OCI-LY7 (cell line): ENCODE measurements at regions of chr7 and their contacts with region 1.

Region 1: GRCh38 chr7:128940494-128941322 is 3.0 kb downstream of the IRF5 start:
- DNase-seq: peak; percentile 93
- H3K4me3 ChIP-seq: peak overlapping the region; percentile 60
- H3K27ac ChIP-seq: peak overlapping the region; percentile 75
- H3K4me1 ChIP-seq: peaks cover 37% of the 10 kb centered on the region
- CTCF ChIP-seq: 0 out of 2 replicates have a peak, but pooled peaks have one; percentile 4

Region 2: GRCh38 chr7:128728598-128728997 is 212.1 kb before region 1 on chr7:
- CTCF ChIA-PET with region 1: no interaction called
- POLR2A ChIA-PET with region 1: no interaction called
- intact Hi-C with region 1: no loop called
- DNase-seq: no peak
- H3K4me3 ChIP-seq: no peak overlapping the region
- H3K27ac ChIP-seq: no peak overlapping the region
- H3K4me1 ChIP-seq: no peaks in the 10 kb centered on the region
- CTCF ChIP-seq: no peak

Region 3: GRCh38 chr7:128849804-128850490 is 90.8 kb before region 1 on chr7:
- CTCF ChIA-PET with region 1: no interaction called
- POLR2A ChIA-PET with region 1: no interaction called
- intact Hi-C with region 1: no loop called
- DNase-seq: no peak
- H3K4me3 ChIP-seq: no peak overlapping the region
- H3K27ac ChIP-seq: no peak overlapping the region
- H3K4me1 ChIP-seq: no peaks in the 10 kb centered on the region
- CTCF ChIP-seq: no peak

Region 4: GRCh38 chr7:128954830-128955802 is 14.4 kb after region 1 on chr7:
- CTCF ChIA-PET with region 1: interaction called, 11 read pairs
- POLR2A ChIA-PET with region 1: interaction called, 29 read pairs
- intact Hi-C with region 1: loop called (anchors 1 kb)
- DNase-seq: peak; percentile 74
- H3K4me3 ChIP-seq: peak overlapping the region; percentile 44
- H3K27ac ChIP-seq: peak overlapping the region; percentile 87
- H3K4me1 ChIP-seq: peaks cover 42% of the 10 kb centered on the region
- CTCF ChIP-seq: peak; percentile 43; the same call in 1 of the 2 replicates

Region 5: DNA sequence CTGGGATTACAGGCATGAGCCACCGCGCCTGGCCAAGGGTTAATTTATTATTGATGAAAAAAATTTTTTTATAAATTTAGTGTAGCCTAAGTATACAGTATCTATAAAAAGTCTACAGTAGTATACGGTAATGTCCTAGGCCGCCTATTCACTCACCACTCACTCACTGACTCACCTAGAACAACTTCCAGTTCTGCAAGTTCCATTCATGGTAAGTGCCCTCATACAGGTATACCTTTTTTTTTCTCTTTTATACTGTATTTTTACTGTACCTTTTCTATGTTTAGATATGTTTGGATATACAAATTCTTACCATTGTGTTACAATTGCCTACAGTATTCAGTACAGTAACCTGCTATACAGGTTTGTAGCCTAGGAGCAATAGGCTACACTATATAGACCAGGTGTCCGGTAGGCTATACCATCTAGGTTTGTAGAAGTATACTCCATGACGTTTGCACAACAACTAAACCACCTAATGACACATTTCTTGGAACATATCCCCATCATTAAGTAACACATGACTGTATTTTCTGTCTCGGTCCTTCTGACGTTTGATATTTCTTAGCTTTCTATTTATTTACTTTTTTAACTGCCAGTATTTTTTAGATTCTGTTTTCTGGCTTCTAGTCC is 20.4 kb after region 1 on chr7:
- CTCF ChIA-PET with region 1: interaction called, 3 read pairs
- POLR2A ChIA-PET with region 1: interaction called, 11 read pairs
- intact Hi-C with region 1: no loop called
- DNase-seq: no peak
- H3K4me3 ChIP-seq: no peak overlapping the region
- H3K27ac ChIP-seq: no peak overlapping the region
- H3K4me1 ChIP-seq: peaks cover 28% of the 10 kb centered on the region
- CTCF ChIP-seq: no peak